Lower leg skin (tissue), 4 donors: ENCODE measurements at regions of chr6 and their contacts with region 1.

Region 1: DNA sequence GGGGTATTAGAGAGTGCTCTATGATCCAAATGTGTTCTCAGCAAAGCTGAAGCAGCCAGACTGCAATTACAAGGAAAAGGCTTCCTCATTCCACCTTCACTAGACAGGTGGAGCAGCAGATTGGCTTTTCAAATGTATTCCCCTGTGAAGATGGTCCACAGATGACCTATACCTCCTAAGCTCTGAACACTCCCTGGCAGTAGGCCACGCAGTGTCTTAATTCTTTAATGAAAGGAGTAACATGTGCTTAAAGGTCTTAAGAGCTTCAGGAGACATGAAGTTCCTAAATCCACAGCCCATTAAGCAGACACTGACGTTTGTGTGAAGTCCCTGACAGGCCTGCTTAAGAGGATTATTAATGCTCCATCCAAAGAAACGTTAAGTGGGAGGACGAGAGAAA is 138.9 kb upstream of the NUP153 start:
- DNase-seq: no peak
- H3K4me3 ChIP-seq: no peak overlapping the region
- CTCF ChIP-seq: no peak
- POLR2A ChIP-seq: no peak

Region 2: GRCh38 chr6:18122124-18123093 is 276.8 kb after region 1 on chr6 and contains the start of gene NHLRC1:
- intact Hi-C with region 1: loop called (anchors 10 kb)
- DNase-seq: peak; percentile 89 to 98
- H3K4me3 ChIP-seq: peak within 1 kb of the TSS; percentile 32
- CTCF ChIP-seq: peak in 2 of 3 donors; percentile 77 to 100
- POLR2A ChIP-seq: no peak
- total RNA-seq, gene NHLRC1: 3.5 to 6.9 (median 5.0) TPM

Region 3: GRCh38 chr6:19312241-19312978 is 1466.8 kb after region 1 on chr6:
- intact Hi-C with region 1: no loop called
- DNase-seq: no peak
- H3K4me3 ChIP-seq: no peak overlapping the region
- CTCF ChIP-seq: no peak
- POLR2A ChIP-seq: no peak